Esophagus muscularis mucosa (tissue), 4 donors: ENCODE measurements at regions of chr3 and their contacts with region 1.

Region 1: GRCh38 chr3:103829723-103830326 is 1395.0 kb downstream of the ZPLD1 start:
- DNase-seq: no peak
- H3K4me3 ChIP-seq: no peak overlapping the region
- H3K27ac ChIP-seq: no peak overlapping the region
- H3K4me1 ChIP-seq: no peaks in the 10 kb centered on the region
- H3K27me3 ChIP-seq: no peaks in the 10 kb centered on the region
- CTCF ChIP-seq: no peak
- EP300 ChIP-seq: no peak
- POLR2A ChIP-seq: no peak

Region 2: DNA sequence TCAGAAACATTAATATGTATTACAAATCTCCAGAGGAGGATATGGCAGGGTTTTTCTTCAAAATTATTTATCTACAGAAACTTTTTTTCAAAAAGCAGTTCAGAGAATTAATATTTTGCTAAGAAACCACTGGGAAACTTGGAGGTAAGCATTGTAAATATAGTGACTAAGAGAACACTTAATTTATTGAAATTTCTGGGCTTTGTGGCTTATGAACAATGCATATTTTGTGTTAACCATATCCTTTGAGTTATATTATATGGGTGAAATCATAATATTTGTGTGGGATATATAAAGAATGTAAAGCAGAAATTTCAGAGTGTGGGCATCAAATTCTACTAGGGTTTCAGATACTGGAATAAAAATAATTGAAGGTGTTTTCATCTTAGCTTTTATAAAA is 335.8 kb before region 1 on chr3:
- intact Hi-C with region 1: no loop called
- DNase-seq: no peak
- H3K4me3 ChIP-seq: no peak overlapping the region
- H3K27ac ChIP-seq: no peak overlapping the region
- H3K4me1 ChIP-seq: no peaks in the 10 kb centered on the region
- H3K27me3 ChIP-seq: no peaks in the 10 kb centered on the region
- CTCF ChIP-seq: no peak
- EP300 ChIP-seq: no peak
- POLR2A ChIP-seq: no peak

Region 3: DNA sequence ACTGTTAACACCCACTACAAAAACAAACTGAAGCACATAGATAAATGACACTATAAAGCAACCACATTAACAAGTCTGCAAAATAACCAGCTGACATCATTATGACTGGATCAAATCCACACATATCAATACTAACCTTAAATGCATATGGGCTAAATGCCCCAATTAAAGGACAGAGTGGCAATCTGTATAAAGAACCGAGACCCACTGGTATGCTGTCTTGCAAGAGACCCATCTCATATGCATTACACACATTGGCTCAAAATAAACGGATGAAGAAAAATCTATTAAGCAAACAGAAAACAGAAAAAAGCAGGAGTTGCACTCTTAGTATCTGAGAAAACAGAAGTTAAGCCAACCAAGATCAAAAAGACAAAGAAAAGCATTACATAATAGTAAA is 19.7 kb before region 1 on chr3:
- intact Hi-C with region 1: loop called (anchors 1 kb)
- DNase-seq: no peak
- H3K4me3 ChIP-seq: no peak overlapping the region
- H3K27ac ChIP-seq: no peak overlapping the region
- H3K4me1 ChIP-seq: no peaks in the 10 kb centered on the region
- H3K27me3 ChIP-seq: no peaks in the 10 kb centered on the region
- CTCF ChIP-seq: no peak
- EP300 ChIP-seq: no peak
- POLR2A ChIP-seq: no peak